Aorta (tissue), 5 donors: ENCODE measurements at regions of chr17 and their contacts with region 1.

Region 1: GRCh38 chr17:7931709-7932482 is at the starts of genes CNTROB and TRAPPC1:
- DNase-seq: peak; percentile 100
- ATAC-seq: peak; percentile 99
- H3K4me3 ChIP-seq: peak within 1 kb of the TSS; percentile 59 to 61
- H3K27ac ChIP-seq: no peak within 1 kb of the TSS
- H3K4me1 ChIP-seq: no peaks in the 10 kb centered on the region
- H3K27me3 ChIP-seq: no peaks in the 10 kb centered on the region
- total RNA-seq, gene CNTROB: 18.3 to 29.2 TPM
- total RNA-seq, gene TRAPPC1: 70.3 to 101 TPM

Region 2: GRCh38 chr17:7889166-7889955 is 42.5 kb before region 1 on chr17:
- intact Hi-C with region 1: loop called in 1 of 2 experiments (anchors 1 kb)
- DNase-seq: peak; percentile 98 to 99
- ATAC-seq: peak; percentile 76
- H3K4me3 ChIP-seq: no peak overlapping the region
- H3K27ac ChIP-seq: peak overlapping the region in 1 of 2 donors; percentile 78
- H3K4me1 ChIP-seq: peaks cover 0 to 3% of the 10 kb centered on the region in 2 donors
- H3K27me3 ChIP-seq: no peaks in the 10 kb centered on the region

Region 3: GRCh38 chr17:7969433-7969832 is 37.5 kb after region 1 on chr17:
- intact Hi-C with region 1: no loop called
- DNase-seq: no peak
- ATAC-seq: no peak
- H3K4me3 ChIP-seq: no peak overlapping the region
- H3K27ac ChIP-seq: no peak overlapping the region
- H3K4me1 ChIP-seq: no peaks in the 10 kb centered on the region
- H3K27me3 ChIP-seq: no peaks in the 10 kb centered on the region

Region 4: DNA sequence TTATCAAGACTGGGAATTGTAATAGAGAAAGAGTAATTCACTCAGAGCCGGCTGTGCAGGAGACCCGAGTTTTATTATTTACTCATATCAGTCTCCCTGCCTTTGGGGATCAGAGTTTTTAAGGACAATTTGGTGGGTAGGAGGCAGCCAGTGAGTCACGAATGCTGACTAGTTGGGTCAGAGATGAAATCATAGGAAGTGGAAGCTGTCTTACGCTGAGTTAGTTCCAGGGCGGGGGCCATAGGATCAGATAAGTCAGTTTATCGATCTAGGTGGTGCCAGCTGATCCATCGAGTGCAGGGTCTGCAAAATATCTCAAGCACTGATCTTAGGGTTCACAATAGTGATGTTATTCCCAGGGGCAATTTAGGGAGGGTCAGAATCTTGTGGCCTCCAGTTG is 50.3 kb after region 1 on chr17:
- intact Hi-C with region 1: no loop called
- DNase-seq: no peak
- ATAC-seq: no peak
- H3K4me3 ChIP-seq: no peak overlapping the region
- H3K27ac ChIP-seq: no peak overlapping the region
- H3K4me1 ChIP-seq: no peaks in the 10 kb centered on the region
- H3K27me3 ChIP-seq: no peaks in the 10 kb centered on the region

Region 5: GRCh38 chr17:8001976-8002720 is 70.3 kb after region 1 on chr17 and contains the start of gene GUCY2D:
- intact Hi-C with region 1: no loop called
- DNase-seq: peak in 1 of 2 donors; percentile 63
- ATAC-seq: no peak
- H3K4me3 ChIP-seq: no peak within 1 kb of the TSS
- H3K27ac ChIP-seq: no peak within 1 kb of the TSS
- H3K4me1 ChIP-seq: no peaks in the 10 kb centered on the region
- H3K27me3 ChIP-seq: no peaks in the 10 kb centered on the region
- total RNA-seq, gene GUCY2D: not detected

Region 6: GRCh38 chr17:8057691-8058114 is 125.8 kb after region 1 on chr17:
- intact Hi-C with region 1: loop called in 1 of 2 experiments (anchors 10 kb)
- DNase-seq: peak in 1 of 2 donors; percentile 34
- ATAC-seq: peak; percentile 88
- H3K4me3 ChIP-seq: no peak overlapping the region
- H3K27ac ChIP-seq: no peak overlapping the region
- H3K4me1 ChIP-seq: no peaks in the 10 kb centered on the region
- H3K27me3 ChIP-seq: no peaks in the 10 kb centered on the region

Region 7: GRCh38 chr17:8118769-8119580 is 187.1 kb after region 1 on chr17:
- intact Hi-C with region 1: no loop called
- DNase-seq: peak; percentile 90 to 96
- ATAC-seq: peak; percentile 85
- H3K4me3 ChIP-seq: peak overlapping the region; percentile 20 to 39
- H3K27ac ChIP-seq: no peak overlapping the region
- H3K4me1 ChIP-seq: no peaks in the 10 kb centered on the region
- H3K27me3 ChIP-seq: no peaks in the 10 kb centered on the region